ENCODE measurements at regions of chr11 and their contacts with region 1.

Region 1: DNA sequence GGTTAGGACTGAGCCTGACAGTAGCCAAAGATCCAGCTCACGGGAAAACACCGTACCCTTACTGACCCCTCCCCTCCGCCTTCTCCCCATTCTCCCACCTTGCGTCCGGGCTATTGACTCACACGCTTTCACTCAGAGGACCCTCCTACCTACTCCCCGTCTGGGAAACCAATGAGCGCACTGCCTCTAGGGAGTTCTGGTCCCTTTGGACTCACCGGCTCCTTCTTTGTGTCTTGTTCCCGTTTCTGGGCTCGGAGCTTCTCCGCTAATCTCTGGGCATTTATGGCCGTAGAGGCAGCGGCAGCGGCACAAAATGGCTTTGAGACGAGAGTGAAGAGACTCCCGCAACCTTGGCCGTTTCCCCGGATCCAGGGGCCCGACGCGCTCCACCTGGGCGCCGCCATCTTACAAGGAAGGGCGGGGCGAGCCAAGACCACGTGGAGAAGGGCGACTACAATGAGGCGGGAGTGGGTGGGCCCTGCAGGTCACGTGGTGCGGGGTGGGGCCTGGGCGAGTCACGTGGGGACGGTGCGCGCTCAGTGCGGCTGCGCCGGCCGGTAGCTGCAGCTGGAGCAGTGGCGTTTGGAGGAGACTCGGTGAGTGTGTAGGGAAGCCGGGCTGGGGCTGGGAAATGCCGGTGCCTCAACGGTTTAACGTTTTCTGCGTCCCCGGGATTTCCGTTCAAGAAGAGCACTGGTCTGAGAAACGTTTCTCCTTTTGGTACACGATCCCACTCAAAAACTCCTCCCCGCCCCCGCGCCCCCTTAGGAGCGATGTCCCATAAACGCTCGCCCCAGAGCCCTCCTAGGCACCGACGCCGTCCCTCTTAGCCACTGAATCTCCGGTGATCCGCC is at the starts of genes FAM118B and RPUSD4:
- DNase-seq: peak; percentile 97 to 100 (median 98)
- H3K4me3 ChIP-seq: peak within 1 kb of the TSS; percentile 74 to 99 (median 91)
- H3K27ac ChIP-seq: peak within 1 kb of the TSS in 44 of 59 donors; percentile 1 to 88 (median 61)
- H3K27me3 ChIP-seq: no peaks in the 10 kb centered on the region
- CTCF ChIP-seq: peak in 19 of 56 donors; percentile 10 to 54 (median 29)
- total RNA-seq, gene FAM118B: 16.9 to 40.6 (median 24.6) TPM
- total RNA-seq, gene RPUSD4: 16.6 to 37.0 (median 27.1) TPM

Region 2: DNA sequence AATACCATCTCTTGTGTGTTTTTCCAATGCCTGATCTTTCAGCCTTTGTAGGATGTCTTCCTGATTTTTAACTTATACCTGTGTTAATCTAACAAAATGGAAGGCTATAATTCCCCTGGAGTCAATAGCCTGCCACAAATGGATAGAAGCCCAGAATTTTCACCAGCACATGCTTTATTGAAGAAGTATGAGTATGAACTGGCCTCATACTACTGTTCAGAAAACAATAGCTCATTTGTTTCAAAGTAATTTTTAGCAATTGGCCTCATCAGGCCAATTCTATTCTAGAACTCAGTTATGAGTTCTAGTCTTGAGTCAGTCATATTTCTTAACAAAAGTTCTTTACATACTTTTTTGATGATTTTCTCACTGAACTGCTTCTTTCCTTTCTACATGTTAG is 1188.9 kb before region 1 on chr11:
- intact Hi-C with region 1: no loop called
- DNase-seq: no peak
- H3K4me3 ChIP-seq: no peak overlapping the region
- H3K27ac ChIP-seq: no peak overlapping the region
- H3K27me3 ChIP-seq: no peaks in the 10 kb centered on the region
- CTCF ChIP-seq: no peak

Region 3: DNA sequence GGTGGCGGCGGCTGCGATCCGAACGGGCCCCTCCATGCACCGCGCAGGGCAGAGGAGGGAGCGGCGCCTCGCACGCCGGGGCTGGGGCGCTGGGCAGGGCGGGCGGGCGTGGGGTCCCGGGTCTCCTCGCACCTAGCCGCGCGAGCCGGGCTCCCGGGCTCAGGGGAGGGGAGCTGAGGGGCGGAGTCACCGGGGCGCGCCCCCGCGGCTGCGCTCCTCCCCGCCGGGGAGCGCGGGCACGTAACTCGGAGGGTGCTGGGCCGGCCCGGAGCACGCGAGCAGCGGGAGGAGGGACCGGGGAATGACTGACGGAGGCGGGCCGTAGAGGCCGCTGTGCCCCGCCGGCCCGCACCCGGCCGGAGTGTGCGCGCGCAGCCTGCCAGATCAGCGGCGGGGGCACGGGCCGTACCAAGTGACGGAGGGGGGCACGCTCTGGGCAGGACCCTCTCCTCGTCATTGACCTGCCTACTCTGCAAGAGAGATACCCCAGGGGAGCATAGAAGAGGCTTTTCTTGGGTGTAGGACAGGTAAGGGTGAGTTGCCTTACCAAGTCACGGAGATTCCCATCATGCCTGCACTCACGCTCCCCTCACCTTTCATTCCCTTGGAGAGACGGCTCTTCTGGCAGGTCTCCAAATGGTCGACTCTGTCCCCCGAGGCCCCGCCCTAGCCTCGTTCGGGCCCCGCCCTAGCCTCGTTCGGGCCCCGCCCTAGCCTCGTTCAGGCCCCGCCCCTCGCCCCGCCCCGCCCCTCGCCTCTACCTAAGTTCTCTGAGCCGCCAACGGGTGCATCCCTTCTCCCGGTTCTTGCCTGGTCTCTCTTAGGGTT is 148.6 kb before region 1 on chr11 and contains the start of gene CDON:
- intact Hi-C with region 1: loop called in 1 of 2 experiments (anchors 5 kb)
- DNase-seq: peak; percentile 69 to 95 (median 84)
- H3K4me3 ChIP-seq: peak within 1 kb of the TSS; percentile 54 to 96 (median 77)
- H3K27ac ChIP-seq: peak within 1 kb of the TSS in 52 of 59 donors; percentile 9 to 90 (median 72)
- H3K27me3 ChIP-seq: no peaks in the 10 kb centered on the region
- CTCF ChIP-seq: peak in 41 of 56 donors; percentile 7 to 55 (median 27)
- total RNA-seq, gene CDON: 10.0 to 38.0 (median 18.7) TPM

Region 4: GRCh38 chr11:126268708-126269579 is 57.5 kb after region 1 on chr11 and contains the starts of genes FOXRED1 and SRPRA:
- intact Hi-C with region 1: loop called (anchors 2 to 5 kb)
- DNase-seq: peak; percentile 98 to 100 (median 99)
- H3K4me3 ChIP-seq: peak within 1 kb of the TSS; percentile 58 to 100 (median 93)
- H3K27ac ChIP-seq: peak within 1 kb of the TSS; percentile 53 to 95 (median 86)
- H3K27me3 ChIP-seq: no peaks in the 10 kb centered on the region
- CTCF ChIP-seq: peak in 29 of 56 donors; percentile 5 to 55 (median 29)
- total RNA-seq, gene FOXRED1: 46.1 to 103 (median 68.0) TPM
- total RNA-seq, gene SRPRA: 48.5 to 86.8 (median 67.0) TPM

Region 5: DNA sequence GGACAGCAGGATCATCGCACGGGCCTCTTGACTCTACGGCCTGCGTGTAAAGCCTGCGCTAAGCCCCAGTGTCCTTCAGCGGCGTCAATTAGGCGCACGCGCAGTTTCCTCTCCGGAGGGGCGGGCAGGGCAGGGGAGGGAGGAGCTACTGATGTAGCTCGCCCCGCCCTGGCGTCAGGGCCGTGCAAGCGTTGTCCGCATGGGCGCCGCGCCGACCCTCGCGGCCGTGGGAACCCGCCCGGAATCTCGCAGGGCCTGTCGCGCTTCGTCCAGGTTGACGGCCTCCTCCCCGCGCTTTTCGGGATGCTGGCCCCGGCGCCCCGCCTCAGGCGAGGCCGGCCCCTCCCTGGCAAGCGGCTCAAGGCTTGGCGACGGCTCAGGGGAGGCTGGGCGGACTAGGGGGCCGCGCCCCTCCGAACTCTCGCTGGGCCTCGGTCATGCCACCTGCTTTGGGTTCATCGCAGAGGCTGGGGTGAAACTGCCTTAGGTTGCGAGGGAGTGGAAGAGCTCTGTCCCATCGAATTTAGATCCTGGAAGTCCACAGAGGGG is 205.2 kb after region 1 on chr11:
- intact Hi-C with region 1: loop called in 1 of 2 experiments (anchors 5 kb)
- DNase-seq: peak; percentile 87 to 91 (median 90)
- H3K4me3 ChIP-seq: peak overlapping the region; percentile 33 to 73 (median 60)
- H3K27ac ChIP-seq: peak overlapping the region; percentile 55 to 95 (median 89)
- H3K27me3 ChIP-seq: no peaks in the 10 kb centered on the region
- CTCF ChIP-seq: peak in 21 of 56 donors; percentile 4 to 45 (median 21)

Measured in dorsolateral prefrontal cortex (tissue), 120 donors.